AG04449 (cell line): ENCODE measurements at regions of chr17 and their contacts with region 1.

Region 1: DNA sequence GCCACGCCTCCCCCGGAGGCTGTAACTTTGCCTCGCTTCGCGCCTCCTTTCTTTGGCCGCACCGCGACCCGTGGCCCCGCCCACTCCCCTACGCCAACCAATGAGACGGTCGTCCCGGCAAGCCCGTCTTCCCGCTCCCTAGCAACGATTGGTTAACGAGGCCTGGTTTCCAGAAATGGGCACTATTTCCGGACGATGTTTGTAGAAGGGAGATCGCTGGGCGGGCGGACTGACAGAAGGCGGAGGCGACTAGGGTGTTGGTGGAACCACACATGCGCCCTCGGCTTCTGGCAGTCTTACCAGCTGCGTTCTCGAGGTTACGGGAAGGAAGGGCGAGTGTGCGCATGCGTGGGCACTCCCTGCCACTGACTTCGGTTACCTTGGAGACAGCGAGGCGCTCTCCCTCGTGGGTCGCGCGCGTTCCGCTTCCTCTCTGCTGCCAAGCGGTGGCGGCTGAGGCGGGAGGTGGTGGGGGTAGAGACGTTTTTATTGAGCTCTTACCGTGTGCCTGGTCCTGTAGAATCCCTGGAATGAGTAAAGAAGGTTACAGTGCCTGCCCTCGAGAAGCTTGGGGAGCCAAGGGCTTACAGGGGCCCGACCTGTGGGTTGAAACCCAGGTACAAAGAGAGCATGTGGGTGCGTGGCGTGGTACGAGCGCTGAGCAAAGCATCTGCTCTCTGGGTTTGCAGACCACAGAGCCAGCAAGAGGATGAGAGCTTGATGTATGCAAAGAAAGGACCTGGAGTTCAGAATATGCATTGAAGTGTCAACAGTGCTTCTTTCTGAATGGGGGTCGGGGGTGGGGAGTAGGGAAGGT is 500 bp upstream of the MAP3K14 start:
- DNase-seq: peak; percentile 100
- H3K4me3 ChIP-seq: peak overlapping the region; percentile 57
- CTCF ChIP-seq: no peak

Region 2: DNA sequence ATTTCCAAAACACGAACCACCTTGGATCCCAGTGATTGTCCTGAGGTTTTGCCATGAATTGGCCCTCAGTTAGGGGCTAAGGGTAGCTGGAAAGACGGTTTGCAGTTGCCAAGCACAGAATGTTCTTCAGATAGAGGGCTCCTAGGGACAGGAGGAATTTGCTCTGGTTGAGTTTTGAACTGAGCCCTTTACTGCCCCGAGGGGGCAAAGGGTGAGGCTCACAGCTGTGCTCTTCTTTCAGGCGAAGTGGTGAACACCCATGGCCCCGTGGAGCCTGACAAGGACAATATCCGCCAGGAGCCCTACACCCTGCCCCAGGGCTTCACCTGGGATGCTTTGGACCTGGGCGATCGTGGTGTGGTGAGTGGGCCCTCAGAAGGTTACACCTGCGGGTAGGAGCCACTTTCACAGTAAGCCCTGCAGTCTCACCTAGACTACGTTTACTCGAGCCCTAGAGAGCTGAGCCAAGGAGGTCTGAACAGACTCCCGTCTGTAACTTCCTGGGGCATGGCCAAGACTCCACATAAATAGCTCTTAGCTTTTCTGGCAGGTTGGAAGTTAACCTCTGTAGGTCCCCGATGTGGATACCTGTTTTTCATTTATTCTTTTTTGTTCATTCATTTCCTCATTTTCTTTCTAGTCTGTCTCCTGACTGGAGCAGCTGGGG is 223.7 kb before region 1 on chr17:
- CTCF ChIA-PET with region 1: no interaction called
- POLR2A ChIA-PET with region 1: no interaction called
- DNase-seq: no peak
- H3K4me3 ChIP-seq: no peak overlapping the region
- CTCF ChIP-seq: no peak

Region 3: GRCh38 chr17:45235416-45236281 is 81.7 kb before region 1 on chr17:
- CTCF ChIA-PET with region 1: no interaction called
- POLR2A ChIA-PET with region 1: no interaction called
- DNase-seq: peak; percentile 9
- H3K4me3 ChIP-seq: no peak overlapping the region
- CTCF ChIP-seq: peak; percentile 87

Region 4: GRCh38 chr17:45305532-45306087 is 11.7 kb before region 1 on chr17:
- CTCF ChIA-PET with region 1: interaction called, 11 read pairs
- POLR2A ChIA-PET with region 1: interaction called, 7 read pairs
- DNase-seq: no peak
- H3K4me3 ChIP-seq: no peak overlapping the region
- CTCF ChIP-seq: no peak

Region 5: DNA sequence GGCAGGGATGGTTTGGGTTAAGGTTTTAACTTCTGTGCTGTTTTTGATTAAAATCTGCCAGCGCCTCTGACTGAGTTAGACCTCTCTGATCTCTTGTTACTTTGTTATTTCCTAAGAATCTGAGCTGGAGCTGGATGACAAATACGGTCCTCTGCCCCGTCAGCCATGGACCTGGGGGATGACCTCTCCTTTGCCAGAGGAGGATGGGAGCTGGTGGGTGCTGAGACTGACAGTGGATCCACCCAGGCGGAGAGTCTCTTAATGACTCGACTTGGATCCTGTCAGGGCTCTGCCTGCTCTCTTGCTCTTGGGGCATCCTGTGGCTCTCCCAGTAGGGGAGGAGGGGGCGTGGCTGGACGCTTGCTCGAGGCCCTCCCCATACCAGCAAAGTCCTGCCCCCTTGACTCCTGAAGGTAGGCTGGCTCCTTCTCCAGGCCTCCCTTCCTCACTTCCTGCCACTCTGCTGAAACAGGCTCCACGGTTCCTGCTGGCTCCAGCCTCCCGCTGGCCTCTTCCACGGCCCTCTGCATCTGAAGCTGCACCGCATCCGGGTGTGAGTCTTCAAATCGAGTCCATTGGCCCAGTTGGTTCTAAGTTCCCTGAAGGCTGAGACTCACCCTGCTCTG is 24.3 kb after region 1 on chr17:
- CTCF ChIA-PET with region 1: interaction called, 3 read pairs
- POLR2A ChIA-PET with region 1: interaction called, 11 read pairs
- DNase-seq: peak; percentile 63
- H3K4me3 ChIP-seq: peak overlapping the region; percentile 42
- CTCF ChIP-seq: no peak

Region 6: GRCh38 chr17:45353043-45353442 is 35.7 kb after region 1 on chr17:
- CTCF ChIA-PET with region 1: no interaction called
- POLR2A ChIA-PET with region 1: no interaction called
- DNase-seq: no peak
- H3K4me3 ChIP-seq: no peak overlapping the region
- CTCF ChIP-seq: no peak

Region 7: DNA sequence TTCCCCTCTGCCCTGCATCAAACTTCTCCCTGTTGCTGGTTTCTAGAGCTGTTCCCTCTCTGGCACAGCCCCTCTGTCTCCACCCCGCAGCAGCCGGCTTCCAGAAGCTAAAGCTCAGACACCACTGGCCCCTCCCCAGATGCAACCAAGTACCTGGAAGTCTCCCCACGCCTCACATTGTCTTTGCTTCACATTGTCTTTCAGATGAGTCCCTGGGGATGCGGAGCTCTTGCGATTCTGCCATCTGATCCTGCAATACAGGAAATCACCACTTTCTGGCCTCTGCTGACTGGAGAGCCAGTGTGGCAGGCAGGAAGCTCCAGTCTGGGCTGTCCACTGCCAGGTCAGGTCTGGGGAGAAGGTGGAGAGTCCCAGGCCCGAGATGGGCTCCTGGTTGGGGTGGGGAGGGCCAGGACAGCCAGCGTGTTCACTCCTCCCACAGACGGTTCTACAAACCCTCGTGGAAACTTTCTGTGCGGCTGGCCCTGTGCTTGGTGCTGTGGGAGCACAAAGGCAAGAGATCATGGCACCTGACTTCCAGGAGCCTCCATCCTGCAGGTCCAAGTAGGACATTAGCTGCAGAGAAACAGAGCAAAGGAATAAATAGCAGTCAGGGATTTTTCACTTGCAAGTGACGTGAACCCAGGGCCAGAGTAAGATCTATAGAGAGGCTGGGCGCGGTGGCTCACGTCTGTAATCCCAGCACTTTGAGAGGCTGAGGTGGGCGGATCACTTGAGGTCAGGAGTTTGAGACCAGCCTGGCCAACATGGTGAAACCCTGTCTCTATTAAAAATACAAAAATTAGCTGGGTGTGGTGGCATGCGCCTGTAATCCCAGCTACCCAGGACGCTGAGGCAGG is 47.4 kb after region 1 on chr17:
- CTCF ChIA-PET with region 1: interaction called, 14 read pairs
- POLR2A ChIA-PET with region 1: no interaction called
- DNase-seq: no peak
- H3K4me3 ChIP-seq: no peak overlapping the region
- CTCF ChIP-seq: no peak

Region 8: GRCh38 chr17:45371414-45372327 is 54.4 kb after region 1 on chr17:
- CTCF ChIA-PET with region 1: interaction called, 14 read pairs
- POLR2A ChIA-PET with region 1: interaction called, 15 read pairs
- DNase-seq: peak; percentile 94
- H3K4me3 ChIP-seq: peak overlapping the region; percentile 18; the same call in 1 of the 2 replicates
- CTCF ChIP-seq: peak; percentile 22

Region 9: DNA sequence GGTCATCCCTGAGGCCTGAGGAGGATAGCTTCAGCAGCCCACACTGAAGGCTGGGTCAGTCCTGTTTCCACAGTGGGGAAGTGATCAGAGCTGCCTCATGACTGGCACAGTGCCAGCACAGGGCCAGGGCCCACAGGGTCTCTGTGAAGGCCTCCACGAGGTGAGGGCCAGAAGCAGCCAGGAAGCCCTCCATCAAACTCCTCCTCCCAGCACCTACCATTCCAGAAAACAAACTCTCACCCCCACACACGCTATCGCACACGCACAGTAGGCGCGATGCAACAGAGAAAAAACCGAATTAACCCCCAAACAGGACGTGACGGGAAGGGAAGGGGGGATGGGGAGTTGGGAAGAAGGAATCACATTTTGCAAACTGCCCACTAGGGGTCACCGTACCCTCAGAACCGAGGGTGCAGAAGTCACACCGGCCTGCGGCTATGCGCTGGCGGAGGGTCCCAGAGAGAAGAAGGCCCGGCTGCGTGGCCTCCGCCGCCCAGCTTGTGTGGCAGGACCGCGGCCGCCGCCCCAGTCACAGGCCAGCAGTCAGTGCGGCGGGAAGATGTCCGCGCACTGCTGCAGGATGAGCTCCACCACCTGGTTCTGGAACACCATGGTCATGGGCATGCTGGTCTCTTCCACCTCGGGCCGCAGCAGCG is 77.7 kb after region 1 on chr17:
- CTCF ChIA-PET with region 1: interaction called, 17 read pairs
- POLR2A ChIA-PET with region 1: no interaction called
- DNase-seq: no peak
- H3K4me3 ChIP-seq: peak overlapping the region; percentile 51
- CTCF ChIP-seq: peak; percentile 81